Naive thymus-derived CD4-positive, alpha-beta T cell (primary cell): ENCODE measurements at regions of chr2 and their contacts with region 1.

Region 1: GRCh38 chr2:127081826-127082633 is 24.9 kb downstream of the BIN1 start:
- DNase-seq: peak; percentile 64 to 87 (median 83)
- ATAC-seq: peak; percentile 83
- H3K4me3 ChIP-seq: peak overlapping the region; percentile 99
- H3K4me3 Mint-ChIP-seq: peak overlapping the region; percentile 89 to 97 (median 94)
- H3K27ac ChIP-seq: peak overlapping the region; percentile 89
- H3K27ac Mint-ChIP-seq: peak overlapping the region; percentile 94 to 99 (median 98)
- H3K4me1 ChIP-seq: peaks cover 78 to 80% of the 10 kb centered on the region in 2 donors
- H3K4me1 Mint-ChIP-seq: peaks cover 65 to 95% (median 83%) of the 10 kb centered on the region in 7 donors
- H3K27me3 ChIP-seq: no peaks in the 10 kb centered on the region
- H3K27me3 Mint-ChIP-seq: no peaks in the 10 kb centered on the region

Region 2: DNA sequence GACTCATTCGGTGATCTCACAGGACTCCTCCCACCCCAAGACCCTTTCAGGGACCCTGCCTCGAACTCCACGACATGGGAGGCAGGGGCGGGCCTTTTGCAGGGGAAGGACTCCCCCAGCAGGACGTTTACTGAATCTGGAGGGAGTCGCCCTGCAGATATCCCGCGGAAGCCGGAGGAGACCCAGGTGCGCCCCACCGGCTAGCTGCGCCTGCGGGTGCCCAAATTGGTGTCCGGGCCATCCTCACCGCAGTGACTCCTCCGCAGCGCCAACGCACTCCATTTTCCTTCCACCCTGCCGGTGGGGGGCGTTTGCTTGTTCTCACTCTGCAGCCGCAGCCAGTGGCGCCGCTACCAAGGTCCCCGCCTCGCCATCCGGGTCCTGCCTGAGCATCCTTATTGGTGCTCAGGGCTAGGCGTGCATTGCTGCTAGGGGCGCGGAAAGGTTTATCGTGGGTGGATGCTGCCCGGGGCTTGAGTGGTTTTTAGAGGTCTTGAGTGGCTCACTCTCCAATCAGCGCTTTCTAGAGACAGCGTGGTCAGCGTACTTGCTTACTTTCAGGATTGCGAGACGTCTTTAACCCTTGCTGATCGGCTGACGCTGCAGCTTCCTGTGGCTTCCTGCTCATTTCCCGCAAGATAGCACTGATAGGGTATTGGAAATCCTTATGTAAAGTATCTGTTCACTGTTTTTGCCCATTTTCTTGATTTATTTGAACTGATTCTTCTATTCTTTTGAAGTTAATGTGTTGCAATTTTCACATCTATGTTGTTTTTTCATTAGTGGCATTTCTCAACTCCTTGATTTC is 56.5 kb before region 1 on chr2:
- CTCF ChIA-PET with region 1: no interaction called
- POLR2A ChIA-PET with region 1: no interaction called
- intact Hi-C with region 1: loop called in 1 of 2 experiments (anchors 2 kb)
- DNase-seq: peak; percentile 51 to 78 (median 72)
- ATAC-seq: peak; percentile 96
- H3K4me3 ChIP-seq: peak overlapping the region; percentile 72
- H3K4me3 Mint-ChIP-seq: peak overlapping the region; percentile 79 to 93 (median 90)
- H3K27ac ChIP-seq: peak overlapping the region; percentile 6
- H3K27ac Mint-ChIP-seq: peak overlapping the region in 6 of 9 donors; percentile 20 to 78 (median 58)
- H3K4me1 ChIP-seq: peaks cover 0 to 8% of the 10 kb centered on the region in 2 donors
- H3K4me1 Mint-ChIP-seq: peaks cover 7 to 14% (median 13%) of the 10 kb centered on the region in 7 donors
- H3K27me3 ChIP-seq: no peaks in the 10 kb centered on the region
- H3K27me3 Mint-ChIP-seq: peaks cover 10 to 54% (median 20%) of the 10 kb centered on the region in 5 donors

Region 3: GRCh38 chr2:127064642-127065250 is 17.3 kb before region 1 on chr2:
- CTCF ChIA-PET with region 1: interaction called, 12 read pairs
- POLR2A ChIA-PET with region 1: interaction called, 9 read pairs
- intact Hi-C with region 1: loop called (anchors 1 kb)
- DNase-seq: peak in 2 of 9 donors; percentile 33 to 82
- ATAC-seq: peak; percentile 83
- H3K4me3 ChIP-seq: no peak overlapping the region
- H3K4me3 Mint-ChIP-seq: no peak overlapping the region
- H3K27ac ChIP-seq: no peak overlapping the region
- H3K27ac Mint-ChIP-seq: peak overlapping the region in 1 of 9 donors; percentile 18
- H3K4me1 ChIP-seq: peaks cover 5 to 9% of the 10 kb centered on the region in 2 donors
- H3K4me1 Mint-ChIP-seq: peaks cover 6 to 23% (median 12%) of the 10 kb centered on the region in 7 donors
- H3K27me3 ChIP-seq: no peaks in the 10 kb centered on the region
- H3K27me3 Mint-ChIP-seq: no peaks in the 10 kb centered on the region

Region 4: GRCh38 chr2:127106951-127107621 is 25.1 kb after region 1 on chr2 and contains the start of gene BIN1:
- CTCF ChIA-PET with region 1: no interaction called
- POLR2A ChIA-PET with region 1: interaction called, 21 read pairs
- intact Hi-C with region 1: loop called (anchors 1 kb)
- DNase-seq: peak; percentile 39 to 81 (median 53)
- ATAC-seq: peak; percentile 90
- H3K4me3 ChIP-seq: peak within 1 kb of the TSS; percentile 66
- H3K4me3 Mint-ChIP-seq: peak within 1 kb of the TSS; percentile 79 to 96 (median 90)
- H3K27ac ChIP-seq: peak within 1 kb of the TSS; percentile 22
- H3K27ac Mint-ChIP-seq: peak within 1 kb of the TSS in 5 of 9 donors; percentile 3 to 47 (median 38)
- H3K4me1 ChIP-seq: peaks cover 4% of the 10 kb centered on the region in 2 donors
- H3K4me1 Mint-ChIP-seq: peaks cover 2 to 8% (median 5%) of the 10 kb centered on the region in 7 donors
- H3K27me3 ChIP-seq: no peaks in the 10 kb centered on the region
- H3K27me3 Mint-ChIP-seq: peaks cover 0 to 57% (median 10%) of the 10 kb centered on the region in 5 donors
- total RNA-seq, gene BIN1: 103 to 120 (median 109) TPM

Region 5: GRCh38 chr2:127293748-127294562 is 211.9 kb after region 1 on chr2 and contains the start of gene ERCC3:
- CTCF ChIA-PET with region 1: no interaction called
- POLR2A ChIA-PET with region 1: interaction called, 3 read pairs
- intact Hi-C with region 1: loop called (anchors 5 to 10 kb)
- DNase-seq: peak; percentile 54 to 81 (median 72)
- ATAC-seq: peak; percentile 93
- H3K4me3 ChIP-seq: peak within 1 kb of the TSS; percentile 87
- H3K4me3 Mint-ChIP-seq: peak within 1 kb of the TSS; percentile 92 to 99 (median 98)
- H3K27ac ChIP-seq: peak within 1 kb of the TSS; percentile 86
- H3K27ac Mint-ChIP-seq: peak within 1 kb of the TSS; percentile 77 to 97 (median 95)
- H3K4me1 ChIP-seq: peaks cover 8 to 12% of the 10 kb centered on the region in 2 donors
- H3K4me1 Mint-ChIP-seq: peaks cover 18 to 49% (median 37%) of the 10 kb centered on the region in 7 donors
- H3K27me3 ChIP-seq: no peaks in the 10 kb centered on the region
- H3K27me3 Mint-ChIP-seq: no peaks in the 10 kb centered on the region
- total RNA-seq, gene ERCC3: 43.4 to 71.5 (median 56.8) TPM

Region 6: GRCh38 chr2:128027801-128028667 is 946.0 kb after region 1 on chr2 and contains the start of gene SAP130:
- CTCF ChIA-PET with region 1: no interaction called
- POLR2A ChIA-PET with region 1: no interaction called
- intact Hi-C with region 1: loop called in 1 of 2 experiments (anchors 1 kb)
- DNase-seq: peak; percentile 96 to 99 (median 98)
- ATAC-seq: peak; percentile 86
- H3K4me3 ChIP-seq: peak within 1 kb of the TSS; percentile 86
- H3K4me3 Mint-ChIP-seq: peak within 1 kb of the TSS; percentile 87 to 98 (median 98)
- H3K27ac ChIP-seq: peak within 1 kb of the TSS; percentile 91
- H3K27ac Mint-ChIP-seq: peak within 1 kb of the TSS; percentile 52 to 97 (median 93)
- H3K4me1 ChIP-seq: peaks cover 0 to 14% of the 10 kb centered on the region in 2 donors
- H3K4me1 Mint-ChIP-seq: peaks cover 14 to 32% (median 28%) of the 10 kb centered on the region in 7 donors
- H3K27me3 ChIP-seq: no peaks in the 10 kb centered on the region
- H3K27me3 Mint-ChIP-seq: peaks cover 0 to 16% (median 0%) of the 10 kb centered on the region in 5 donors
- total RNA-seq, gene SAP130: 29.9 to 38.0 (median 30.9) TPM